HEK293 (cell line): ENCODE measurements at regions of chr19 and their contacts with region 1.

Region 1: GRCh38 chr19:13033819-13034611 is 38.7 kb downstream of the NFIX start:
- H3K4me3 ChIP-seq: no peak overlapping the region
- H3K27ac ChIP-seq: no peak overlapping the region
- H3K4me1 ChIP-seq: peaks cover 29% of the 10 kb centered on the region
- CTCF ChIP-seq: peak; percentile 76

Region 2: DNA sequence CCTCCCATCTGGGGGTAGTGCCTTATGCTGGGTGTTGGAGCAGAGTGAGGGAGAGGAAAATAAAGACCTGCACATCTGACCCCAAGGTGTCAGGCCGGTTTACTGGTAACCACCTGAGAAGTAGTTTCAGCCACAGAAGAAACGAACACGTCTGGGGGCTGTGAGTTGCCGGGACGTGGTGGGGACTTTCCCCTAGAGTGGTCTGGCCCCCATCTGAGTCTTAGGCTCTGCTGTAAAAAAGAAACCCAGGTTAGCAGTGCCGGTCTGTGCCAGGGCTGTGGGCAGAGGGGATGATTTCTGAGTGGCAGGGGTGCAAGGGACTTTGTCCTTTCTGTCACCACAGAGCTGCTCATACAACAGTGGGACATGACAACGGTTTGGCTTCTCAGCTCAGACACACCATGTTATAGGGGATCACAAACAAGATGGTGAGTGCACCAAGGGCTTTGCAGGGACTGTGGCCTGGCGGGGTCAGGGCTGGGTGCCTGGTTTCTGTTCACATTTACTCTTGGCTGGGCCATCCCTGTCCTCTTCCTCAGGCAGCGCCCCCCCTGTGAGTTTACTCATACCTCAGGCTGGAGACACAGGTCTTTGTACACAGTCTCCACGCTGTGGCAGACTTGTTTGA is 134.0 kb before region 1 on chr19:
- CTCF ChIA-PET with region 1: no interaction called
- POLR2A ChIA-PET with region 1: no interaction called
- H3K4me3 ChIP-seq: no peak overlapping the region
- H3K27ac ChIP-seq: no peak overlapping the region
- H3K4me1 ChIP-seq: no peaks in the 10 kb centered on the region
- CTCF ChIP-seq: no peak

Region 3: GRCh38 chr19:13002166-13002898 is 31.7 kb before region 1 on chr19:
- CTCF ChIA-PET with region 1: interaction called, 56 read pairs
- POLR2A ChIA-PET with region 1: no interaction called
- H3K4me3 ChIP-seq: no peak overlapping the region
- H3K27ac ChIP-seq: no peak overlapping the region
- H3K4me1 ChIP-seq: no peaks in the 10 kb centered on the region
- CTCF ChIP-seq: no peak

Region 4: GRCh38 chr19:13022859-13023636 is 11.0 kb before region 1 on chr19:
- CTCF ChIA-PET with region 1: interaction called, 40 read pairs
- POLR2A ChIA-PET with region 1: interaction called, 3 read pairs
- H3K4me3 ChIP-seq: no peak overlapping the region
- H3K27ac ChIP-seq: peak overlapping the region; percentile 44; the same call in 1 of the 2 replicates
- H3K4me1 ChIP-seq: peaks cover 14% of the 10 kb centered on the region
- CTCF ChIP-seq: no peak

Region 5: DNA sequence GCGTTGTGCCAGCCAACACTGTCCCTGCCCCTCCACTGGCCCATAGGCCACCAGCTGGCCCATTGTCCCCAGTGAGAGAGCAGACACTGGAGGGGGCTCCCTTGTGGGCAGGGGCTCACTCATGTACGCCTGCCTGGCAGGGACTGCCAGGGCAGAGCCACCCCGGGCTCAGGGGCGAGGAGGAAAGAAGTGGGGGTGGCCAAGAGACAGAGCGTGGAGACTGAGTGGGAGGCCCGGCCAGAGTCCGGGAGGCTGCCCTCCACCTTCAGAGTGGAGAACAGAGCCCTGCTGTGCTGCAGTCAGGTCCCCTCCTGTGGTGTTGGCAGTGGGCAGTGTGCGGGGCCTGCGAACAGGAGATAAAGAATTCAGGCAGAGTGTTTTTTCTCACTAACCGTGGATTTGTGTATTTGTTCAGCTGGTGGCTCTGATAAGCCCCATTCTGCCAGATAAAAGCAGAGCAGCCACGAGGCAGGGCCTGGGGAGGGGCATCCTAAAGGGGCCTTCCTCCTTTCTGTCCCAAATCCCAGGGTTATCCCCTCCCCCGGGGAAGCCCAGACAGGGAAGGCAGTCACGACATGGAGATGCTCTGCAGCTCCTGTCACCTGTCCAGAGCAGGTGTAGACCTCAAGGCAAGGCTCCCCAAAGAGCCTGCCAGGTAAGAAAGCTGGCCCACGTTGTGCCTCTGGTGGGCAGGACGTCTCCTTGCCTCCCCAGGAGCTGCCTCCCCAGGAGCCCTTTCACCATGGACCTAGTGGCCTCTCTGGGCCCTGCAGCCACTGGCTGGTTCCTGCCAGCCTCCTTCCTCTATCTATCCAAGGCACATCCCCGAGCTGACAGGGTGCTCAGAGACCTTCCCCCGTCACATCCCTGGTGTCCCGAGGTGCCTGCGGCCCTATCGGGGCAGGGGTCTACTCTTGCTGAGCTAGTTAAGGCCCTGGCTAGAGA is 35.7 kb after region 1 on chr19:
- CTCF ChIA-PET with region 1: interaction called, 247 read pairs
- POLR2A ChIA-PET with region 1: no interaction called
- H3K4me3 ChIP-seq: no peak overlapping the region
- H3K27ac ChIP-seq: no peak overlapping the region
- H3K4me1 ChIP-seq: no peaks in the 10 kb centered on the region; the same call in 1 of the 2 replicates
- CTCF ChIP-seq: no peak

Region 6: GRCh38 chr19:13093407-13094105 is 59.5 kb after region 1 on chr19:
- CTCF ChIA-PET with region 1: interaction called, 39 read pairs
- POLR2A ChIA-PET with region 1: interaction called, 4 read pairs
- H3K4me3 ChIP-seq: no peak overlapping the region
- H3K27ac ChIP-seq: no peak overlapping the region
- H3K4me1 ChIP-seq: no peaks in the 10 kb centered on the region
- CTCF ChIP-seq: peak; percentile 95